Activated CD4-positive, alpha-beta memory T cell treated with anti-CD3 and anti-CD28 coated beads for 36 hours (primary cell): ENCODE measurements at regions of chr6 and their contacts with region 1.

Region 1: DNA sequence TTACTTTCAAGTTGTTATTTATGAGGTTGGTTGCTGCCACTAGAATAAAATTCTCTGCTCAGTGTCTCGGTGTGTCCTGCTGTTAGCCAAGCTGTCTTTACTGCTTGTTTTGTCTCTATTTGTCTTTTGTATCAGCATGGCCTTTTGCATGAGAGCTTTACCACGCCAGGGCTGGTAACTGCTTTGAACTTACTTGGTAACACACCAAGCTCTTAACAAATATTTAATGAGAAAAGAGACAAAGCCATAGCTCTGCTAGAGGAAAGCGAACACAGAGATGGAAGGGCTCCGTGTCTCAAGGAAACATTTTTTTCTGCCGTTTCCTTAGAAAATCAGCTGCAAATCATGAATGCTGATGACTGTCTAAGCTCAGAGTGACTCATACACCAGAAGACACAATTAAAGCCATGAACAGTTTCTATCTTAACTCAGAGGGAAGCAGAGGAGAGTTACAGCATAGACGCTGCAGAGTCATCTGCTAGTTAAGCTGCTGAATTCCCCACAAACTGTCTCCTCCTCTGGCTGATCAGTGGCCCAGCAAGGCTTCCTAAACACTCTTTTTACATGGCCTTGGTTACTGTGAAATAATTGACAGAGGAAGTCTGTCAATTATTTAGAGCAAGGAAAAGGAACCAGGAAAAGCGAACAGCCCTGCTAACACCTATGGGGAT is 44.8 kb downstream of the AGPAT4 start:
- DNase-seq: no peak
- H3K4me3 Mint-ChIP-seq: no peak overlapping the region
- H3K27ac Mint-ChIP-seq: peak overlapping the region; percentile 71
- H3K4me1 Mint-ChIP-seq: peaks cover 47% of the 10 kb centered on the region
- H3K27me3 Mint-ChIP-seq: no peaks in the 10 kb centered on the region

Region 2: GRCh38 chr6:161128680-161129196 is 100.3 kb before region 1 on chr6:
- CTCF ChIA-PET with region 1: no interaction called
- POLR2A ChIA-PET with region 1: no interaction called
- intact Hi-C with region 1: loop called (anchors 5 kb)
- DNase-seq: peak; percentile 62
- H3K4me3 Mint-ChIP-seq: no peak overlapping the region
- H3K27ac Mint-ChIP-seq: peak overlapping the region; percentile 85
- H3K4me1 Mint-ChIP-seq: peaks cover 16% of the 10 kb centered on the region
- H3K27me3 Mint-ChIP-seq: no peaks in the 10 kb centered on the region

Region 3: GRCh38 chr6:161242779-161243693 is 14.0 kb after region 1 on chr6:
- CTCF ChIA-PET with region 1: no interaction called
- POLR2A ChIA-PET with region 1: no interaction called
- intact Hi-C with region 1: no loop called
- DNase-seq: no peak
- H3K4me3 Mint-ChIP-seq: no peak overlapping the region
- H3K27ac Mint-ChIP-seq: no peak overlapping the region
- H3K4me1 Mint-ChIP-seq: peaks cover 8% of the 10 kb centered on the region
- H3K27me3 Mint-ChIP-seq: no peaks in the 10 kb centered on the region

Region 4: DNA sequence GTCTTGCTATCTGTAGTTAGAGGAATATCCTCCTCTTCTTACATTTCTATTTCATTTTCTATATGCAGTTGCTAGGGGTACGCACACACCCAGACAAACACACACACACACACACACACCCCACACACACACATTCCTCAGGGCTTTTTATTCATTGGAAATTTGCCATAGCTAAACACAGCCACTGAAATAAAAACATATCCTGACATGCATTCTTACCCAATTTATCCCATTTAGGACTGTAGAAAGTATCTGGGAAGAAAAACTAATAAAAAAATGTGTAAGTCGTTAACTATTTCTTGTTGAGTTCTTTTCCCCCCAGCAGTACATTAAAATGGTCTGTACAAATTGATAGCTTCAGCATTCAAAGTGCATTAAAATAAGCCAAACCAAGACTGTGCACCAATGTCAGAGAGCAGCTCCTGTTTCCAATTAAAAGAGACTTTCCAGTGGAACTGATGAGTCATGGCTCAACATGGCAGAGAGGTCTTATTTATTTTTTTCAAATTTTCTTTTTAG is 402.7 kb after region 1 on chr6:
- CTCF ChIA-PET with region 1: no interaction called
- POLR2A ChIA-PET with region 1: no interaction called
- intact Hi-C with region 1: no loop called
- DNase-seq: no peak
- H3K4me3 Mint-ChIP-seq: no peak overlapping the region
- H3K27ac Mint-ChIP-seq: no peak overlapping the region
- H3K4me1 Mint-ChIP-seq: no peaks in the 10 kb centered on the region
- H3K27me3 Mint-ChIP-seq: no peaks in the 10 kb centered on the region